Activated T-helper 1 cell treated with anti-CD3 and anti-CD28 coated beads, Interleukin-12 subunit alpha, Interleukin-12 subunit beta, Interleukin-2, Interleukin-4 antibody, amounts not matched to agents 30 ng/mL and 10 ng/mL and 1 ng/mL, durations not matched to agents 14 hours and 24 hours and 36 hours (primary cell): ENCODE measurements at regions of chr9 and their contacts with region 1.

Region 1: GRCh38 chr9:111298731-111299598 is 31.1 kb downstream of the OR2K2 start:
- DNase-seq: no peak
- H3K4me3 Mint-ChIP-seq: no peak overlapping the region
- H3K27ac Mint-ChIP-seq: no peak overlapping the region
- H3K4me1 Mint-ChIP-seq: peaks cover 3% of the 10 kb centered on the region
- H3K27me3 Mint-ChIP-seq: peaks cover 7% of the 10 kb centered on the region

Region 2: DNA sequence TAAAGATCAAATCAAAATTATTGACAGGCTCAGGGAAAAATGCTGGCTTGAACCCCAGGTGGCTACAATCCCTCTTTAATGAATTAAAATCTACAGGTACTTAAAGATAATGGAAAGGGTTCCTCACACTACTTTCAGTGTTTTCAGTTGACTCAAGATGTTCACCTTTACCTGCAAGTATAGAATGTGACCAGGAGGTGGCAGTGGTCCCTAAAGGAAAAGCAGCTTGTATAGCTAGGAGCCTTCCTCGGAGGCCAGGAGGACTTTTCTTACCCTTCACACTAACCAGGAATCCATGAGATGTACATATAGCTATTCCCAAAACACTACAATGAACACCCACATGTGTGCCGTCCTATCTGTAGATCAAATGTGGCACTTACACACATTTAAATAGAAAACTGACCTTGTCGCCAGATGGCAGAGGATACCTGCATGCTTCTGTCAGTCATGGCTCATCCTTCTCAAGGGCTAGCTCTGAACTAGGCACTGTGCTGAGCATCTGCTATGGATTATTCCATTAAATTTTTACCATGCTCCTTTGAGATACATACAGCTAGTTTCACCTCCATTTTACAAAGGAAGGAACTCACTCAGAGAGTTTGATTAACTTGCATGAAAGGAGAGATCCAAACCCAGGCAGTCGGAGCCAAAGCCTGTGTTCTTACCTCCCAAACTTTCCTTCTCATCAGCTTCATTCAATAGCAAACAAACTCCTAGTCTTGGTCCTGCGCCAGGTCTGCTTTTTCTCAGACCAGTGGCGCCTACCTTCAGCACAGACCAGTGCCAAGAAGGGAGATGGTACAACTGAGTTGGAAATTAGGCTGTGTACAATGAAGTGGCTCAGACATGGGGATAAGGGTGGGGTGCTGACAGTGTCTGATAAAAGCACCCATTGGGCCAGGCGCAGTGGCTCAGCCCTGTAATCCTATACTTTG is 1115.5 kb before region 1 on chr9:
- intact Hi-C with region 1: loop called (anchors 2 kb)
- DNase-seq: peak; percentile 44
- H3K4me3 Mint-ChIP-seq: no peak overlapping the region
- H3K27ac Mint-ChIP-seq: no peak overlapping the region
- H3K4me1 Mint-ChIP-seq: peaks cover 20% of the 10 kb centered on the region
- H3K27me3 Mint-ChIP-seq: peaks cover 3% of the 10 kb centered on the region

Region 3: DNA sequence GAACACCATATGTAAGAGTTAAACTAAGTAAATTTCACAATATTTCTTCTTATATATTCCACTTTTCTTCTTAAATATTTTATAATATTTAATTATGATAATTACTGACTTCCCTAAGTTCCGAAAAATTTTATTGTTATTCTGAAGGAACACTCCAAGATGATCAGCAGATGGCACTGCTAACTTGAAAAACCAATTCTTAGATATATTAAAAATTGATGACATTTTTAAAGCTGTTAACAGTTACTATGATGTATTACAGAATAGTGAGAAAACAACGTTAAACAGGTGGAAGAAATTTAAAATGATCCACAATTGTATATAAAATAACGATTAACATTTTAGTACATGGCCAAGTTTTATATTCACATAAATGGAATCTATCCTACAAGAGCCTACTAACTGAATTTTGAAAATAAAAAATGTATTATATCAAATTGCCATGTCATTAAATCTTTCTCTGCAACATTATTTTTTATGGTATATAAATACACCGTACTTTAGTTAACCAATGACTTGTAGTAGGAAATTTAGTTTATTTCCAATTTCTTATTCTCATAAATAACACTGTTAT is 660.5 kb before region 1 on chr9:
- intact Hi-C with region 1: loop called (anchors 10 kb)
- DNase-seq: no peak
- H3K4me3 Mint-ChIP-seq: no peak overlapping the region
- H3K27ac Mint-ChIP-seq: no peak overlapping the region
- H3K4me1 Mint-ChIP-seq: no peaks in the 10 kb centered on the region
- H3K27me3 Mint-ChIP-seq: peaks cover 6% of the 10 kb centered on the region

Region 4: DNA sequence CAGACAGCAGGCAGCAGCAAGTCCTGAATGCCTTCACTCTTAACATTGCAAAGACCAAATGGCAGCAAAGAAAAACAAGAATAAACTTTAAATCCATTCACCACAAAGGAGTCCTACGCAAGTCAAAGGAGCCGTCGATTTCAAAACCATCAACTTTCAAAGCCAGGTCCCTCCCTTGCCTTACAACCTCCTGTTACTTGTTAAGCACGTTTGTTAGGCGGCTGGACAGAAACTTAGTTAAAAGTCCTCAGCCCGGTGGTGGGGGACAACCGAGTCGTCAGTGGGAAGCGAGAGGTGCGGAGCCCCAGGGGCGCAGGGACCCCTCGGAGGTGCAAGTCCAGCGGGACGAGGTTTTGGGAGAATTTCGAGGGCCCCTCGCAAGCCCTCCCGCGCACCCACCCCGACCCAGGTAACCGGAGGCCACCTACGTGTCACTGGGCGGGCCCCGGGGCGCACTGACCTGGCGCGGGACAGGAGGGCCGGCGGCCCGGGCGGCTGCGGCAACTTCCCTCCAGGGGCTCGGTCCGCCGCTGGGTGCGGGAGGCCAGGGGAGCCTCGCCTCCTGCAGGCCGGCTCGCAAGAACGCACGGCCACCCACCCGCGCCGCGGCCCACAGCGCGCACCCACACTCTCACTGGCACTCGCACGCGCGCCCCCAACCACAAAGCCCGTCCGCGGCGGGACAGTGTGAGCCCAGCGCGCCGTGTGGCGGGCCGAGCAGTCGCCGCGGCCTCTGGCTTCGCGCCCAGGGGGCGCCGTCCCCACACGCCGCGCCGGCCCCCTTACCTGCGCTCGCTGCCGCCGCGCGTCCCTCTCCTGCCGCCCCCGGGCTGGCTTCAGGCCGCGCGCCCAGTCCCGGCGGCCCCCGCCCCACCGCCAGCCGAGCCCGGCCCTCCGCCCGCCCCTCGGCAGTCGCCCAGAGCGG is 261.3 kb before region 1 on chr9:
- intact Hi-C with region 1: loop called (anchors 10 kb)
- DNase-seq: no peak
- H3K4me3 Mint-ChIP-seq: no peak overlapping the region
- H3K27ac Mint-ChIP-seq: no peak overlapping the region
- H3K4me1 Mint-ChIP-seq: peaks cover 11% of the 10 kb centered on the region
- H3K27me3 Mint-ChIP-seq: peaks cover 41% of the 10 kb centered on the region